ENCODE measurements at regions of chr15 and their contacts with region 1.

Region 1: DNA sequence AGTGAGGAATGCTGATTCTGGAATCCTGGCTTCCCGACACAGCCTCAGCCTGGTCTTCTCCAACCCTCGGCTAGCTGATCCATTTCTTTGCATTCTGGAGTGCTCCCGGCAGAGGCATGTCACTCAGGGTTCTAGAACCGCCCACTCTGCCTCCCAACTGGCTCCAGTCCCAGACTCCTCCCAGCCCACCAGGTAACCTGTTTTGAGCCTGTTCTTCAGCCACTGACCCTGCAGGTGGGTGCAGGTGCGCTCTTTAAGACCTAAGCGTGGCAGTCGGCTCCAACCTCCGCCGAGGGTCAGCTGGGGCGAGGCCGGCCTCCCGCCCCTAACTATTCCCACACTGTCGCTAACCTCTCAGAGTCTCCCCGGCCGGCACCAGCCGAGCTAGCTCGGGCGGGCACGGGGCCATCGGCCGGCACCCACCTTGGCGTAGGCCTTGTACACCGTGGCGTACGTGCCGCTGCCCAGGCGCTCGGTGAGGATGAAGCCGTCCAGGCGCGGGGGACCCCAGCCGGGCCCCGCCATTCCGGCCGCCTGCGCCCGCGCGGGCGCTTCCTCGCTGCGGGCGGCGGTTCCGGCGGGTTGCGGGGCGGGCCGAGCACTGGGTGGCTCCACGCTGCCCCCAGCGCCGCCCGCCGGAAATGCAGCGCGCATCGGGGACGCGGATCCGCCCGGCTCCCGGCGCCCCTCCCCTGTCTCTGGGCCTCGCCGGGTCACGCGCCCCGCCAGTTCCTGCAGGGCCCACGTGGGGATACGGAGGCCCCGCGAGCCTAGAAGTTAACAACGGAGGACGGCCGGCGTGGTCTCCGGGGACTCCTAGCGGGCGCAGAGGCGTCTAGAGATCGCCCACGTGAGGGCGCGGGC is at the start of gene ULK3:
- DNase-seq: peak; percentile 70 to 95
- H3K4me3 ChIP-seq: peak within 1 kb of the TSS; percentile 70 to 95
- H3K27ac ChIP-seq: peak within 1 kb of the TSS; percentile 75 to 78
- H3K4me1 ChIP-seq: peaks cover 4 to 7% of the 10 kb centered on the region in 2 donors
- H3K27me3 ChIP-seq: no peaks in the 10 kb centered on the region
- CTCF ChIP-seq: peak; percentile 66 to 90 (median 68)
- total RNA-seq, gene ULK3: 54.0 TPM

Region 2: DNA sequence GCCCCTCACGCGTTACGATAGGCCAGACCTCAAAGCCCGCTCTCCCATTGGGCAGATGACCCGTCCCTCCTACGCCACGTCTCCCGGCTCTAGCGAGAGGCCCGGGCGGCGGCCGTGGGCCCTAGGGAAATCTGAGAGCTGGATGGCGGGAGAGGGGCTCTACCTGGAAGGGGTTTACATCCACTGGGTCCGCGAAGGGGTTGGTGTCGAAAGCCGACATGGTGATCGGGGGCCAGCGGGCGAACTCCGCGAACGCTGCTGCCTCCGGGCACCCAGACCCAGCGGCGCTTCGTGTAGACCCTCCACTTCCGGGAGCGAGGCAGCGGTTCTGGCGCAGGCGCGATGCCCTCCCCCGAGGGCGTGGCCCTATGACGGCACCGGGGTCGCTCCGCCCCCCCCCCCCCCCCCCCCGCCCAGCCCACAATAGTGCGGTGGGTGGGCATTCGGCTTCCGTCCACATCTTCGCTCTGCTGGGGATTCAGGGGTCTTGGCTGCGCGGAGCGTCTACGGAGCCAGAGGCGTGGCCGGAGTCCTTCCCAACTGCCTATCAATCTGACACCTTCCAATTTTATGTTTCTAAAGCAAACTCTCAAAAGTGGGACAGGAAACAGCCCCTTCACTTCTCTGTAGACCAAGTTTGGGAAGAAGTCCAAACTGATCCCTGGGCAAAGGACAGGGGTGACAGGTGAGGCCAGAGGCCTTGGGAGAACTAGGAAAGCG is 30.4 kb after region 1 on chr15 and contains the start of gene SCAMP2:
- intact Hi-C with region 1: loop called (anchors 2 kb)
- DNase-seq: peak; percentile 84 to 97
- H3K4me3 ChIP-seq: peak within 1 kb of the TSS; percentile 48 to 80
- H3K27ac ChIP-seq: peak within 1 kb of the TSS; percentile 83 to 94
- H3K4me1 ChIP-seq: peaks cover 9 to 40% of the 10 kb centered on the region in 2 donors
- H3K27me3 ChIP-seq: no peaks in the 10 kb centered on the region
- CTCF ChIP-seq: no peak
- total RNA-seq, gene SCAMP2: 90.8 TPM

Region 3: DNA sequence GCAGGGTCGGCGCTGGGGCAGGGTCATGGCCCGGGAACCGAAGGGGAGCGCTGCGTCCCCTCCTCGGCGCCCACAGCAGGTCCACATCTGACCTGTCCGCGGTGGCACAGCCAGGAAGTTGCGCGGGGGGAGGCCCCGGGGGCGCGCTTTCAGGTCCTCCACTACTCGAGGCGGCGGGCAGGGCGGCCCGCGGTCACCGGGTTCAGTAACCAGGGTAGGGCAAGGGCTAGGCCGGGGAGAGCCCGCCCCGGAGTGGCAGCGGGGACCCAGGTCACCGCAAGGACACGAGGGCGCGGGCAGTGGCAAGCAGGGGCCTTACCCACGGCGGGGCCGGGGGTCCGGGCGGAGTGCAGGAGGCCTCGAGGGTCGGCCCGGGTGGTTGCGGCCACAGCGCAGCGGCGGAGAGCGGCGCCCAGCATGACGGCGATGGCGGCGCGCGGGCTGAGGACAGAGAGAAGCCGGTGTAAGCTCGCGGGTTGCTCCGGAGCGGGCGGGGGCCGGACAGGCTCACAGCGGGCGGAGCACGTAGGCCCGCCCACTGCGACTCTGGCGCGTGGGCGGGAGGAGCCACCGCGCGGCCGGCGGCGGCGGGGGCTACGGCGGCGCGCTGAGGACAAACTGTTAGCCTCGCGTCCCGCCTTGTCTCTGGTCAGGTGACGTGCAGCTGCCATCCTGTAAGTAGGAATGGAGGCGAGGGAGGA is 94.9 kb after region 1 on chr15 and contains the start of gene COX5A:
- intact Hi-C with region 1: loop called (anchors 5 kb)
- DNase-seq: peak; percentile 87 to 97
- H3K4me3 ChIP-seq: peak within 1 kb of the TSS; percentile 80 to 83
- H3K27ac ChIP-seq: peak within 1 kb of the TSS; percentile 87 to 88
- H3K4me1 ChIP-seq: peaks cover 8 to 24% of the 10 kb centered on the region in 2 donors
- H3K27me3 ChIP-seq: no peaks in the 10 kb centered on the region
- CTCF ChIP-seq: peak in 1 of 3 experiments; percentile 43
- total RNA-seq, gene COX5A: 83.5 TPM

Region 4: DNA sequence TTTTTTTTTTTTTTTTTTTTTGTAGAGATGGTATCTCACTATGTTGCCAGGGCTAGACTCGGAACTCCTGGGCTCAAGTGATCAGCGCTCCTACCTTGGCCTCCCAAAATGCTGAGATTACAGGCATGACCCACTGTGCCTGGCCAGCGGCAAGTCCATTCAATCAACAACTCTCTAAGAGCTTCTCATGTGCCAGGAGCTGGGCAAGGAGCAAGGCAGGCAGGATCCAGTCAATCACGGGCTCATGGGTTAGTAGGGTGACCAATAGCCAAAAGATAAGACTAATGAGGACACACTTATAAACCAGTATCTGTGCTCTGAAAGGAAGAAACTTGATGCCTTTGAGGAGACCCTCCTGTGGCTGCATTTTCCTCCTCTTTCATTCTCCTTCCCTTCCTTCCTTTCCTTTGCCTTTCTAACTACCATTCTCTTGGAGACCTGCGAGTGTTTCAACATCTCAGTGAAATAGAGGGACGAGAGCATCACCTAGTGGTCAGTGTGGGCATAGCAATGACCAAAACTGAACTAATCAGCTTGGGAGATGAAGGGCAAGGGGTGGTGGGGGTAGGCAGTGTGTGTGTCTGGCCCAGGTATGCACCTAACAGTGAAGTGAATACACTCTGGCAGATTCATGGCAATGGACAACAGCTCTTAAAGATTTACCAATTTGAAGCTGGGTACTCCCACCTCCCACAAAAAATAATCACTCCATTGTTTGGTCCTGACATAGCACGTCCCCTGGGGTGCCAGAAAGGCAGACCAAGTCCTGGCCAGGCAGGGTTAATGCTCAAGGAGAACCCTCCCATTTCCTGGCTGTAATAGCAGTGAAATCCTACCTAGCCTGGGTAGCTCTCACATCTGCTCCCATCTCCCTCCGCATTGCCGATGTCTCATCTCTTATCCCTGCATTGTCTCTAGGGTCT is 107.5 kb after region 1 on chr15:
- intact Hi-C with region 1: loop called (anchors 5 kb)
- DNase-seq: peak in 1 of 2 donors; percentile 90
- H3K4me3 ChIP-seq: no peak overlapping the region
- H3K27ac ChIP-seq: no peak overlapping the region
- H3K4me1 ChIP-seq: peaks cover 2 to 6% of the 10 kb centered on the region in 2 donors
- H3K27me3 ChIP-seq: no peaks in the 10 kb centered on the region
- CTCF ChIP-seq: peak; percentile 96 to 99 (median 99)